PC-3 (cell line): ENCODE measurements at regions of chr6 and their contacts with region 1.

Region 1: DNA sequence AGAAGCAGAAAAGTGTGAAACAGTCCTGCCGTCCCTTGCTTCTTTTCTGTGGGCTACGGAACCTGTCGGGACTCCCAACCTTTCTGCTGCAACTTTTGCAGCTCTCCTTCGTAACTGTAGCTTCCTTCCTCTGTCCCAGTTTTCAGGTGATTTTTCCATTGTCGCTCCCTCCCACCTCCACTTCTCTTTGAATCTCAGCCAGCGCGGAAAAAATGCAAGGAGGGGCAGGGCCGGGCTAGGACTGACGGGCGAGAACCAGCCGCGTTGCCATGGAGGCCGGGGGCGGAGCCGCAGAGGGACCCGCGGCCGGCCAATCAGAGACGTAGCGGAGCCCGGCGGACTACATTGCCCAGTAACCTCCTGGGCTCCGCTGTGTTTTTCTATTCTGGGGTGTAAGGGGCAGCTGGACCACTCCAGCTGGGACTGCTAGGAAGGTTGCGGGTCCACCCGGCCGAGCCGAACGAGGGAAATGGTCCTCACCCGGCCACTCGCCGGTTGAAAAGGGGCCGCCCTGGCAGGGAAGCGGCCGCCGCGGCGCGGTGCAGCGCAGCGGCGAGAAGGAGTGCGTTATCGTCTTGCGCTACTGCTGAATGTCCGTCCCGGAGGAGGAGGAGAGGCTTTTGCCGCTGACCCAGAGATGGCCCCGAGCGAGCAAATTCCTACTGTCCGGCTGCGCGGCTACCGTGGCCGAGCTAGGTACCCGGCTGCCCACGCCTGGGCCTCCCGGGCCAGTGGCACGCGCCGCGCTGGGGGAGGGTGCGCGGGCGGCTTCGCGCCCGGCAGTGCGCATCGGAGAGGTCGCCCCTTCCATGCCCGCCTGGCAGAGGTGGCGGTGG is at the starts of genes CYP39A1 and SLC25A27:
- DNase-seq: peak; percentile 96
- ATAC-seq: peak; percentile 97
- H3K4me3 ChIP-seq: peak within 1 kb of the TSS; percentile 91
- H3K27ac ChIP-seq: no peak within 1 kb of the TSS
- H3K4me1 ChIP-seq: peaks cover 27% of the 10 kb centered on the region
- H3K27me3 ChIP-seq: no peaks in the 10 kb centered on the region
- CTCF ChIP-seq: no peak
- total RNA-seq, gene CYP39A1: 0.66 and 1.2 TPM in 2 replicates
- total RNA-seq, gene SLC25A27: 3.8 and 13.6 TPM in 2 replicates

Region 2: GRCh38 chr6:46605091-46605797 is 47.6 kb before region 1 on chr6:
- CTCF ChIA-PET with region 1: interaction called, 10 read pairs
- POLR2A ChIA-PET with region 1: no interaction called
- intact Hi-C with region 1: no loop called
- DNase-seq: no peak
- ATAC-seq: no peak
- H3K4me3 ChIP-seq: no peak overlapping the region
- H3K27ac ChIP-seq: no peak overlapping the region
- H3K4me1 ChIP-seq: no peaks in the 10 kb centered on the region
- H3K27me3 ChIP-seq: no peaks in the 10 kb centered on the region
- CTCF ChIP-seq: no peak

Region 3: GRCh38 chr6:46704562-46704961 is 51.7 kb after region 1 on chr6:
- CTCF ChIA-PET with region 1: no interaction called
- POLR2A ChIA-PET with region 1: no interaction called
- intact Hi-C with region 1: no loop called
- DNase-seq: peak; percentile 80
- ATAC-seq: peak; percentile 90
- H3K4me3 ChIP-seq: no peak overlapping the region
- H3K27ac ChIP-seq: no peak overlapping the region
- H3K4me1 ChIP-seq: peaks cover 10% of the 10 kb centered on the region
- H3K27me3 ChIP-seq: no peaks in the 10 kb centered on the region
- CTCF ChIP-seq: peak; percentile 76

Region 4: DNA sequence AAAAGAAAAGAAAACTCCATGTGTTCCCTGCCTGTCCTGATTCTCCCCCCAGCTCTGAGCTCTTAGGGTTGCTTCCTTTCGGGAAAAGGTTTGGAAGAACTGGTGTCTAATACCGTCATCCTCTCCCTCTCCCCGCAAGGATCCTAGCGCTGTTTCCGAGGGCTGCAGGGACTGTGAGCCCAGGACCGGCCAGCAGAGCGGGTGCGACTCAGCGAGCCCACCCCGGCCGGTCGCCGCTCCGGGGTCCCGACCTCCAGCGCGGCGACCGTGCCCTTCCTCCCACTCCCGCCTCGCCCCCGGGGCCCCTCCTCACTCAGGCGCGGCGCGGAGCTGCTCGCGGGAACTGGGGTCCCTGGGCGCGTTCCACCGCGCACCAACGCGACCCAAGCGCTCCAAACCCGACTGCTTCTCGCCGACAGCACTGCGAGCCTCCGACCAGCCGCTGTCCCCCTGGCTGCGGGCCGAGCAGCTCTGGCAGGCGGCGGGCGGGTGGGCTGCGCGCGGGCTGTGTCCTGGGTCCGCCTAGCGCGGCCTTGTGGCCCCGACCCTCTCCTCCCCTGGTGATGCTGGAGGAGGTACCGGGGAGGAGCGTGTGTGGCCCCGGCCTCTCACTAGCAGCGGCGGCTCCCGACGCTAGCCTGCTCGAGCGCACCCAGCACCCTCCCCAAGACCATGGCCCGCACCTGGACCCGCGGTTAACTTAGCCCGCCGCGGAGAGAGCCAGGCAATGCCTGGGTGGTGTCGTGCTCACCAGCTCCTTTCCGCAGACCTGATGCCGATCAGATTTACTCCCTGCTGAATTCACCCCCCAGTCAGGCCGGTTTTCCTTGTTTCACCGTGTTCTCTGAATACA is 82.3 kb after region 1 on chr6 and contains the start of gene PLA2G7:
- CTCF ChIA-PET with region 1: no interaction called
- POLR2A ChIA-PET with region 1: no interaction called
- intact Hi-C with region 1: loop called (anchors 5 kb)
- DNase-seq: peak; percentile 69
- ATAC-seq: peak; percentile 65
- H3K4me3 ChIP-seq: peak within 1 kb of the TSS; percentile 87
- H3K27ac ChIP-seq: peak within 1 kb of the TSS; percentile 59
- H3K4me1 ChIP-seq: peaks cover 40% of the 10 kb centered on the region
- H3K27me3 ChIP-seq: no peaks in the 10 kb centered on the region
- CTCF ChIP-seq: no peak
- total RNA-seq, gene PLA2G7: 1.8 and 2.9 TPM in 2 replicates

Region 5: DNA sequence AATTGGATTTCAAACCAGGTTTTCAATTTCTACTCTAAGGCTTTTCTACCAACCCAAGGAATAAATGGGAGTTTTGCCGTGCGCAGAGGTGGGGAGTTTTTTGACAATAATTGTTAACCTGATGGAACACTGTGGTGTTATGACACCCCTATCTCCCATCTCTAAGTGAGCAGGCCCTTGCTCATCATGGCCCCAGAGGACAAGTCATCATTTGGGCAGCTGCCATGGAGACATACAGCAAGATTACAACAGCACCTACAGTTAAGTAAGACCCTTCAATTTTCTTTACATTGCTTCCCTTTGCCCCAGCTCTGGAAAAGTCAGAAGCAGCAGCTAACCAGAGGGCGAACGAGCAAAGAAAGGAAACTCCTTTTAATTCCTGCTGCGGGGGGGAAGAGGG is 214.6 kb after region 1 on chr6:
- CTCF ChIA-PET with region 1: no interaction called
- POLR2A ChIA-PET with region 1: no interaction called
- intact Hi-C with region 1: no loop called
- DNase-seq: peak; percentile 52
- ATAC-seq: no peak
- H3K4me3 ChIP-seq: no peak overlapping the region
- H3K27ac ChIP-seq: no peak overlapping the region
- H3K4me1 ChIP-seq: peaks cover 6% of the 10 kb centered on the region; the same call in 1 of the 2 replicates
- H3K27me3 ChIP-seq: no peaks in the 10 kb centered on the region
- CTCF ChIP-seq: no peak

Region 6: GRCh38 chr6:47621838-47622449 is 969.1 kb after region 1 on chr6:
- CTCF ChIA-PET with region 1: no interaction called
- POLR2A ChIA-PET with region 1: no interaction called
- intact Hi-C with region 1: loop called (anchors 5 kb)
- DNase-seq: no peak
- ATAC-seq: no peak
- H3K4me3 ChIP-seq: no peak overlapping the region
- H3K27ac ChIP-seq: no peak overlapping the region
- H3K4me1 ChIP-seq: no peaks in the 10 kb centered on the region
- H3K27me3 ChIP-seq: no peaks in the 10 kb centered on the region
- CTCF ChIP-seq: no peak